GM18951 (cell line): ENCODE measurements at regions of chr18 and their contacts with region 1.

Region 1: DNA sequence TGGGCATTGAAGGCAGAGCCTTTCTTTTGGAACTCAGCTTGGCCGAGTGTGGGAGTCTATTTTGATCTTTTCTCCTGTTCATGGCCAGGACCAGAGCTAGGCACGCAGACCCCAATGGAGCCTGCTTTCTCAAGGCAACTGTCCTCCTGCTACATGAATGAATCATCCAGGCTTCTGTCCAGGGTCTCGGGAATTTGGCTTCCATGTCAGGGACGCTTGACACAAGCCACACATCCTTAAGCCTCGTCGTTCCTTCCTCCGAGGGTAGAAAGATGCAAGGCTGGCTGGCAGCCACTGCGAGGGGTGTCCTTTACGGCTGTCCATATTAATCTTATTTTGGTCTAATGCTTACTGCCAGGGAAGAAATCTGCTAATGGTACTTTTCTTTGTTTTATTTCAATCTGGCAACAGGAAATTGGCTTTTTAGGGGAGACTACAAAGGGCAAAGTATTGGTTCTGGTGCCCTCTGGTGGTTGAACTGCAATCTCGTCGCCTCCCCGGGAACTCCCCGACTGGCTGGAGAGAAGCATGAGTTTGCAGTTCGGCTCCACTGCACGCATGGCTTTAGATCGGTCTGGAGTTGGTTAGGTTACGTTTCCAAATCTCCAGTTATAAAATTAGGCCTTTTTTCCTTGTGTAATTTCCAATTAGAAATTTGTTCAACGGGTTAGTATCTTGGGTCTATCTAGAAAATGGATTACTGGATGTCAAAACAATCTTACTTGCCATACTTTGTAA is 135.2 kb downstream of the ALPK2 start:
- POLR2A ChIP-seq: no peak

Region 2: DNA sequence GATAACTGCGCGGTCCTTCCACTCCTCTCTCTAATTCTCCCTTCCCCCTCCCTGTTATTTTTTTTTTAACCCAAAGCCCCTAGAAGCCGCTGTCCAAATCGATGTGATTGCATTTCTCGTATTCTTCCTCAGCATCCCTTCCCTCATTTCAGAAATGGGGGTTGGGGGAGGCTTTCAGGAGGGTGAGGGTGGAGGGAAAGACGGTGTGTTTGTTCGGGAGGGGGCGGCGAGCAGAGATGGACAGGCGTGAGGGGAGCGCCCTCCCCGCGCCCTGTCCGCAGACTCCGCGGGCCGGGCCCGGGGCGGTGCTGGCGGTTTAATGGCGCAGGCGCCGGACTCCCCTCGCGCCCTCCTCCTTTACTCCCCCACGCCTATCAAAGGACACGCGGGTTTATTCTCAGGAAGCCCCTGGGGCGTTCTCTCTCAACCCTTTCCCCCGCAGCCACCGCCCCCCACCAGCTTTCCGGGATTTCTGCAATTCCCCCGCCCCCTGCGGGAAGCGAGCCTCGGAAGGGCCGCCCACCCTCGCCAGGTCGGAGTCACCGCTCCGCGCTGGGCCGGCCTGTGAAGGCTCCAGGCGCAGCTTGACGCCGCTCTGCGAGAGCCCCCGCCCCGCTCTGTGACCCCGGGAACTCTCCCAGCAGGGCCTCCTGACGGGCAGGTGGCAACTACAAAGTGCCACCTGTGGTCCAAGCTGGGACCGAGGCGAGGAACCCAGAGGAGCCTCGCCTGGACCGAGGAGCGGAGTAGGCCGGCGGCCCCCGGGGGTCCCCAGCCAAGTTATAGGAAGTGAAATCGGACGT is 1140.3 kb before region 1 on chr18:
- in situ Hi-C with region 1: no loop called
- POLR2A ChIP-seq: no peak

Region 3: GRCh38 chr18:59070181-59070912 is 576.7 kb after region 1 on chr18:
- in situ Hi-C with region 1: loop called (anchors 25 kb)
- POLR2A ChIP-seq: no peak